Activated naive CD4-positive, alpha-beta T cell treated with anti-CD3 and anti-CD28 coated beads, Interleukin-2, amount 10 ng/mL, durations not matched to agents 7 days and 5 days (primary cell): ENCODE measurements at regions of chr7 and their contacts with region 1.

Region 1: DNA sequence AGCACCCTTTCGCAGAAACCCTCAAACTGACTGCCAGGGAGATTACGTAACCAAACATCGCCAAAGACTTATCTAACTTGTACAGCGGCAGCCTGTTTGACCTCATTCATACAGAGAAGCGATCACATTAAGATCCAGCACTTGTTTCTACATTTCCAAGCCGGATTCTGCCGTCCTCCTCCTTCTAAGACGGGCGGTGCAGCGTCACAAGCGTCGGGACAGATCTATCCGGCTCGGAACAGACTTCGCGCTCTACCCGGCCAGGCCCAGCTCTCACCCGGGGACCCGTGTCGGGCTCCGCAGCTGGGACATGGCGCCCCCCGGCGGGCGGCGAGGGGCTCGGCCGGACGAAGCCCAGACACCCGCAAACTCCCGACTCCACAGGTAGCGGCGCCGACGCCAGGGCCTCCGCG is 373 bp downstream of the H2AZ2 start:
- DNase-seq: peak; percentile 89
- H3K4me3 Mint-ChIP-seq: peak overlapping the region; percentile 83
- H3K27ac Mint-ChIP-seq: peak overlapping the region; percentile 97
- H3K4me1 Mint-ChIP-seq: peaks cover 43% of the 10 kb centered on the region
- H3K27me3 Mint-ChIP-seq: no peaks in the 10 kb centered on the region

Region 2: GRCh38 chr7:44885394-44886317 is 38.1 kb after region 1 on chr7 and contains the start of gene PURB:
- CTCF ChIA-PET with region 1: interaction called, 11 read pairs
- DNase-seq: peak; percentile 96
- H3K4me3 Mint-ChIP-seq: peak within 1 kb of the TSS; percentile 98
- H3K27ac Mint-ChIP-seq: peak within 1 kb of the TSS; percentile 100
- H3K4me1 Mint-ChIP-seq: peaks cover 64% of the 10 kb centered on the region
- H3K27me3 Mint-ChIP-seq: no peaks in the 10 kb centered on the region

Region 3: DNA sequence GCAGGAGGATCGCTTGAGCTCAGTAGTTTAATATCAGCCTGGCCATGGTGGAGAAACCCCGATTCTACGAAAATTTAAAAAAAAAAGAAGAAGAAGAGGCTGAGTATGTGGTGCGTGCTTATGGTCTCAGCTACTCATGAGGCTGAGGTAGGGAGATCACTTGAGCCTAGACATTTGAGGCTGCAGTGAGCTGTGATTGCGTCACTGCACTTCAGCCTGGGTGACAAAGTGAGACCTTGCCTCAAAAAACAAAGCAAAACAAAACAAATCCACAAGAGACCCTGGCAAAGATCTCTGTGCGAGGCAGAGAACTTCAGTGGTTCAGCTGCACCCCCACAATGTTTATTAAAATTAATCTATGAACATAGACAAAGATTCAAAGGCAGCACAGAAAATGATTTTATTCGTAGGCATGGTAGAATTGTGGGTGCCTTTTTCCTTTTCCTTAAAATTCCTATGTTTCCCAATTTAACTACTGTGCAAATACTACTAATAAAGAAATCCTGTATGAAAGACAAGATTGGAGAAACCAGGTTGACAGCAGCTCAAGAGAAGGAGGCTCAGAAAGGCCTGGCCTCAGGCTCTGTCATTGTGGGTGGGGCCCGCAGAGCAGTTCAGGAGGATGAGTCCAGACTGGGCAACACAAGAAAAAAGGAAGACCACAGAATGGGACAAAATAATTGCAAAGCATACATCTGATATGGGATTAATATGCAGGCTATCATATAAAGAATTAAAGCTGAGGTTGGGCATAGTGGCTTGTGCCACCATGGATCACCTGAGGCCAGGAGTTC is 62.3 kb after region 1 on chr7:
- CTCF ChIA-PET with region 1: no interaction called
- DNase-seq: no peak
- H3K4me3 Mint-ChIP-seq: no peak overlapping the region
- H3K27ac Mint-ChIP-seq: peak overlapping the region; percentile 62
- H3K4me1 Mint-ChIP-seq: peaks cover 12% of the 10 kb centered on the region
- H3K27me3 Mint-ChIP-seq: peaks cover 12% of the 10 kb centered on the region

Region 4: GRCh38 chr7:44921607-44922359 is 74.3 kb after region 1 on chr7:
- CTCF ChIA-PET with region 1: interaction called, 23 read pairs
- DNase-seq: peak; percentile 96
- H3K4me3 Mint-ChIP-seq: no peak overlapping the region
- H3K27ac Mint-ChIP-seq: no peak overlapping the region
- H3K4me1 Mint-ChIP-seq: peaks cover 16% of the 10 kb centered on the region
- H3K27me3 Mint-ChIP-seq: peaks cover 3% of the 10 kb centered on the region

Region 5: DNA sequence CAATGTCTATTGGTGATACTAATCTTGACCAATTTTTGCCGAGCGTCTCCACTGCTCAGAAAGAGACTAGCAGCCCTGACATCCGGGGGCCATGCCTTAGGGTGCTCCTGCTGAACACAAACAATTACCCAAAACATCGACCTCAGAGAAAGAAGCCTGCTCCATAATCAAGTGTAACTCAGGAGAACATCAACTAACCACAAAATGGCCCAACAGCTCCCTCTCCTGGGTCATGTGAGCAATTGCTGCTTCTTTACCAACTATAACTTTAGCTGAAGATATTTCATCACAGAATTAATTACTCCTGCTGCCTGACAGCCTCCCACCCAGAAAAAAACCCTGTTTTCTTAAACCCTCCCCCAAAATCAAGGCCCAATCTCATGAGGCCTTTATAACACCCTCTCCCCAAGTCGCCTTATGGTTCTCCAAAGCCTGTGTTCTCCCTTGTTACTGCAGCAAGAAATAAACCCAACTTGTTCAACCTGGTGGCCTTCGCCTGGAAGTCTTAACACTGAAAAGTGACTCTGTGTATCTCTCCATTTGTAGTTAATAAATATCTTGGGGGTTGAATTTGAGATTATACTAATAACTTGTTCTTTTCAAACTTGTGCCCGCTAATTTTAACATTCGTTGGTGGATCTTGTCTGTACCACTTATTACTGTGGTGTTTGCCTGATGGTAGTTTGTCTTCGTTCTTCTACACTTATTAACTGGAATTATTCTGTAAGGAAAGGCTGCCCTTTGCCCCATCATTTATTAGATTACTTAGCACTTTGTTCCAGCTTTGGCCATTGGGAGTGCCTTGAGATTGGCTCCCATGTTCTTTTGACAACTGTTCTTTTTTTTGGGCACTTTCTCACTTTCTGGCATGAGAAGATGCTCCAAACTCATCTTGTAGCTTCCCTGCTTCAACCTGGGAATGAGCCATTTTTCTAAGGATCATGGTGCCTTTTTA is 288.9 kb after region 1 on chr7:
- CTCF ChIA-PET with region 1: interaction called, 15 read pairs
- DNase-seq: peak; percentile 82
- H3K4me3 Mint-ChIP-seq: no peak overlapping the region
- H3K27ac Mint-ChIP-seq: no peak overlapping the region
- H3K4me1 Mint-ChIP-seq: peaks cover 32% of the 10 kb centered on the region
- H3K27me3 Mint-ChIP-seq: peaks cover 38% of the 10 kb centered on the region